Transverse colon (tissue), 4 donors: ENCODE measurements at regions of chr1 and their contacts with region 1.

Region 1: DNA sequence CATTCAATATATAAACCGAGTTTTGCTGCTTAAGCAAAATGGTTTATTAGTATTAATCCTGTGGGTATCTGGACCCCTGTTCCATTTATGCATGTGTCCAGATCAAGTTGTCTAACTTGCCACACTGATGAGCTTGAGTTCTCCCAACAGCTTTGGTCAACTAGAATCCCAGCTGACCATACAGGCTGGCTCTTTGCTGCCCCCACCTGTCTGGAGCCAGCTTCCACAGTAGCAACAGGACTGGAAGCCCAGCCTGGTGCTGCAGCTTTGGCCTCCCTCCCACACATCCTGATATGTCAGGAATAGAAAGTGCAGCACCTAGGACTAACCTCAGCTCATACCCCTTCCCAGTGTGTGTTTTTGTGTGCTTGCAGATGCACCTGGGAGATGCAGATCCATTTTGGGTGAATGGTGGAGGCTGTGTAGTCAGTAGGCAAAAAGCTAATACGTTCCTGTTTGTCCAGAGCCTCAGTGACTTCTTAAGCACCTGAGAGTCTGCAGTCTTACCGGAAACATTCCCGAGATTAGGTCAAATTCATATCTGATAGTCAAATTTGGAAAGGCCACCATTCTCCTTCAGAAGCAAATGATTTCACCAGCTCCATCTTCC is 40.9 kb upstream of the BEND5 start:
- DNase-seq: peak; percentile 56
- H3K4me3 ChIP-seq: no peak overlapping the region
- H3K27ac ChIP-seq: no peak overlapping the region
- H3K4me1 ChIP-seq: no peaks in the 10 kb centered on the region
- H3K27me3 ChIP-seq: no peaks in the 10 kb centered on the region
- CTCF ChIP-seq: peak; percentile 49 to 67 (median 59)
- EP300 ChIP-seq: no peak
- POLR2A ChIP-seq: no peak

Region 2: DNA sequence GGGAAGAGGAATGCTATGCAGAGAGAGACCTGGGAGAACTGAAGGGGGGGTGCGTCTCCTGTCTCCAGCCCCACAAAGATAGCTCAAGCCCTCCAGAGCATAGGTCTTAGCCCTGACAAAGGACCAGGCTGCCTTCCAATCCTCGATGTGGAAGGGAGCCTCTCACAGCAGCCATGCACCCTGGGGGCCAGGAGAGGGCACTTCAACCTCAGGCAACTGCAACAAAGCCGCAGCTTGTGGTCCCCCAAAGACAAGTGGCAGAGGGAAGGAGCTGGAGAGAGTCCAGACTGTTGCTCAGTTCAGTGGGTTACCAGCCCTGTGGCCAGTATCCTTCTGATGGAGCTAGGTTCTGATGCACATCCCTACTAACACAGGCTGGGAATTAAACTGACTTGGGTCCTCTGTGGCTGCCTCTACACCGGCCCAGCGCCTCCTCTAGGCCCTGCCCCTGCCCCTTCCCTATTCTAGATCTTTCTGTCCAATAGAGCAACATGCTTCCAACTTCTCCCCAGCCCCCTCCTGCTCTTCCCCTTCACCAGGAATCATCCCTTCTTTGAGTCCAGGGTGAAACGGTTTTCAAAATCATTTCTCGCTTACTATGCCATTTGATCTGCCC is 244.9 kb before region 1 on chr1:
- in situ Hi-C with region 1: loop called in 1 of 4 experiments (anchors 25 kb)
- intact Hi-C with region 1: no loop called
- DNase-seq: peak; percentile 13
- H3K4me3 ChIP-seq: no peak overlapping the region
- H3K27ac ChIP-seq: no peak overlapping the region
- H3K4me1 ChIP-seq: no peaks in the 10 kb centered on the region
- H3K27me3 ChIP-seq: no peaks in the 10 kb centered on the region
- CTCF ChIP-seq: peak in 4 of 5 experiments; percentile 28 to 42 (median 32)
- EP300 ChIP-seq: no peak
- POLR2A ChIP-seq: no peak

Region 3: GRCh38 chr1:48610628-48611542 is 206.7 kb before region 1 on chr1:
- in situ Hi-C with region 1: no loop called
- intact Hi-C with region 1: no loop called
- DNase-seq: no peak
- H3K4me3 ChIP-seq: no peak overlapping the region
- H3K27ac ChIP-seq: peak overlapping the region in 1 of 4 donors; percentile 21
- H3K4me1 ChIP-seq: no peaks in the 10 kb centered on the region
- H3K27me3 ChIP-seq: no peaks in the 10 kb centered on the region
- CTCF ChIP-seq: no peak
- EP300 ChIP-seq: no peak
- POLR2A ChIP-seq: no peak

Region 4: DNA sequence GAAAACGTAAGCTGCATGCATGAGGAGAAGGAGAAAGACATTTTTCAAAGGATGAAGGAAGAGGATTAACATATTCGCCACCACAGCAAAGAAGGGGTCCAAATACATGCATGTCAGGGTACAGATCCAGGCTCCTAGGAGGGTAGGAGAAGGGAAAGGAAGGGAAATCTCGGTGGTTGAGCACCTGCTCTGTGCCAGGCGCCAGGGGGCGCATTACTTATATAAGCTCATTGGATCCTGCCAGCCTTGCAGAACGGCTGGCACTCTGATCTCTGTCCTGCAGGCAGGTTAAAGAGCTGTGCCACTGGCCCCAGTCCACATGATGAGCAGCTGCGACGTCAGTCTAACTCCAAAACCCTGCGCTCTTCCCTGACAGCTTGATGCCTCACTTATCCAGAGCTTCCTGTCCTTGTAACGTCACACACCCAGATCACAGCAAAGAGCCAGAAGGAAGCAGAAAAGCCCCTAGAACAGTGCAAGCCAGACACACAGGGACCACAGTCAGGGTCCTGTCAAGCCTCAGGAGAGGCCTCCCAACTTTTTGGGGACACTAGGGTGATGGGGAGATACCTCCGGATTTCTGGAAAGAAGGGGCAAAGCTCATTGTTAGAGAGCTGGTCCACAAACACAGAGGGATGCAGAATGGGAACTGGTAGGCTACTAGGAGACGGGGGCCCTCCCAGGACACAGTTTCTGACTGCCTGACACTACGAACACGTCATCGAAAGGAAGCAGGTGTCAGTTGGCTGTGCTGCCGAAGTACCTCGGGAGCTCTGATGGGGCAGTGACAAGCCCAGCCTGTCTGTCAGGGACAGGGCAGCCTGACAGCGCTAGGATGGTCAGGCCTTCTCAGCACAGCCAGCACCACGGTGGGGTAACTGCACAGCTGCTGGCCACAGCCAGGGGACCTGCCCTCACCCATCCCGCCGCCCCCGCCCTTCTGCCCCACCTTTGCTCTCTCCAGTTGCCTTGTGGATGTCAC is 140.0 kb before region 1 on chr1:
- in situ Hi-C with region 1: loop called in 1 of 4 experiments (anchors 10 kb)
- intact Hi-C with region 1: loop called (anchors 5 kb)
- DNase-seq: peak; percentile 73
- H3K4me3 ChIP-seq: no peak overlapping the region
- H3K27ac ChIP-seq: no peak overlapping the region
- H3K4me1 ChIP-seq: no peaks in the 10 kb centered on the region
- H3K27me3 ChIP-seq: no peaks in the 10 kb centered on the region
- CTCF ChIP-seq: peak in 4 of 5 experiments; percentile 53 to 68 (median 65)
- EP300 ChIP-seq: no peak
- POLR2A ChIP-seq: no peak

Region 5: GRCh38 chr1:48889082-48889481 is 71.5 kb after region 1 on chr1:
- in situ Hi-C with region 1: no loop called
- intact Hi-C with region 1: no loop called
- DNase-seq: no peak
- H3K4me3 ChIP-seq: no peak overlapping the region
- H3K27ac ChIP-seq: no peak overlapping the region
- H3K4me1 ChIP-seq: no peaks in the 10 kb centered on the region
- H3K27me3 ChIP-seq: no peaks in the 10 kb centered on the region
- CTCF ChIP-seq: no peak
- EP300 ChIP-seq: no peak
- POLR2A ChIP-seq: no peak

Region 6: DNA sequence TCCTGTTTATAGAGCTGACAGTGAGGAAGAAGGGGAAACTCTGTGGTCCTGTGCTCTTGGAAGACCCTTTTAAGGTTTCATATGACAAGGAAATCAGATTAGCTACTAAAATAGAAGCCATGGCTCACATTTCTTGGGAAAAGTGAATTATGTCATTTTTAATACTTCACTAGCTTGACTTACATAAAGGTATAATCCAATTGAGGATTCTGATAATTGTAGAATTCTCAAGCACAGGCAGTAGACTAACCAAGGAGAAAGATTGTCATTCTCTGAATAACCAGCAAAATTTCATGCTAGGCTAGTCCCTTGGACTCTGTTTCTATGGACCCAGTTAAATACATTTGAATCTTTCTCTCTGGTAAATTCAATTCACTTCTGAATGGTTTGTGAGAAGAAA is 572.1 kb after region 1 on chr1:
- in situ Hi-C with region 1: no loop called
- intact Hi-C with region 1: no loop called
- DNase-seq: no peak
- H3K4me3 ChIP-seq: no peak overlapping the region
- H3K27ac ChIP-seq: no peak overlapping the region
- H3K4me1 ChIP-seq: no peaks in the 10 kb centered on the region
- H3K27me3 ChIP-seq: no peaks in the 10 kb centered on the region
- CTCF ChIP-seq: no peak
- EP300 ChIP-seq: no peak
- POLR2A ChIP-seq: no peak